ENCODE measurements at regions of chr11 and their contacts with region 1.

Region 1: GRCh38 chr11:111932611-111932950 is 4.6 kb upstream of the DIXDC1 start:
- DNase-seq: no peak
- ATAC-seq: no peak
- H3K4me3 Mint-ChIP-seq: no peak overlapping the region
- H3K27ac Mint-ChIP-seq: no peak overlapping the region
- H3K4me1 Mint-ChIP-seq: peaks cover 21% of the 10 kb centered on the region
- H3K27me3 Mint-ChIP-seq: no peaks in the 10 kb centered on the region

Region 2: GRCh38 chr11:111944651-111945051 is 12.1 kb after region 1 on chr11:
- CTCF ChIA-PET with region 1: interaction called, 17 read pairs
- POLR2A ChIA-PET with region 1: interaction called, 5 read pairs
- DNase-seq: no peak
- ATAC-seq: peak; percentile 36
- H3K4me3 Mint-ChIP-seq: no peak overlapping the region
- H3K27ac Mint-ChIP-seq: no peak overlapping the region
- H3K4me1 Mint-ChIP-seq: peaks cover 16% of the 10 kb centered on the region
- H3K27me3 Mint-ChIP-seq: no peaks in the 10 kb centered on the region

Measured in activated CD8-positive, alpha-beta T cell treated with anti-CD3 and anti-CD28 coated beads, Interleukin-2, amount 10 ng/mL, durations not matched to agents 7 days and 5 days (primary cell).